ENCODE measurements at regions of chr7 and their contacts with region 1.

Region 1: DNA sequence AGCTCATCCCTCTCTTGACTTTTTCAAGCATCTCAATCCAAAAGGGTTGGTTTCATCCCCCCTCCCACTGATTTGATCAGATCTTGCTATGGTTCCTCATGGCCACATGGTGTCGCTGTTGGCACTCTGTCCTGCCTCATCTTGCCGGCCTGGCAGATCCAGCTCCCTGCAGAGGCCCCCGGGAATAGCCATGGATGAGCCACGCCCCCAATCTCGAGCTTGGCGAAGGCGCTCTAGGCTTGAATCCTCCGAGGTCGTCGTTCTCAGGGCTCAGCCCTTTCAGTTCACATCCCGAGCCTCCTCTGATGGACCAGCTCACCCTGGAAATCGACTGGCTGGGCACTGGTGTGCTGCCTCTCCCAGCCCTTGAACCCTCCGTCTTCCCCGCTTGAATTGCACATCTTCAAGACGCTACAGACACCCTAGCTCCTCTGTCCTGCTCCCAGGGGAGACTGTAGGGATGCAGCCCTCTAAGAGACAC is 628.7 kb downstream of the TYW1 start:
- DNase-seq: peak; percentile 92
- ATAC-seq: peak; percentile 97
- H3K4me3 Mint-ChIP-seq: peak overlapping the region; percentile 60
- H3K27ac Mint-ChIP-seq: no peak overlapping the region
- H3K4me1 Mint-ChIP-seq: peaks cover 29% of the 10 kb centered on the region
- H3K27me3 Mint-ChIP-seq: peaks cover 27% of the 10 kb centered on the region
- CTCF ChIP-seq: peak; percentile 90

Region 2: GRCh38 chr7:67371429-67372305 is 253.6 kb before region 1 on chr7:
- CTCF ChIA-PET with region 1: interaction called, 15 read pairs
- POLR2A ChIA-PET with region 1: no interaction called
- DNase-seq: peak; percentile 70
- ATAC-seq: peak; percentile 100
- H3K4me3 Mint-ChIP-seq: no peak overlapping the region
- H3K27ac Mint-ChIP-seq: no peak overlapping the region
- H3K4me1 Mint-ChIP-seq: no peaks in the 10 kb centered on the region
- H3K27me3 Mint-ChIP-seq: peaks cover 5% of the 10 kb centered on the region; the same call in 1 of the 2 replicates
- CTCF ChIP-seq: peak; percentile 78

Region 3: DNA sequence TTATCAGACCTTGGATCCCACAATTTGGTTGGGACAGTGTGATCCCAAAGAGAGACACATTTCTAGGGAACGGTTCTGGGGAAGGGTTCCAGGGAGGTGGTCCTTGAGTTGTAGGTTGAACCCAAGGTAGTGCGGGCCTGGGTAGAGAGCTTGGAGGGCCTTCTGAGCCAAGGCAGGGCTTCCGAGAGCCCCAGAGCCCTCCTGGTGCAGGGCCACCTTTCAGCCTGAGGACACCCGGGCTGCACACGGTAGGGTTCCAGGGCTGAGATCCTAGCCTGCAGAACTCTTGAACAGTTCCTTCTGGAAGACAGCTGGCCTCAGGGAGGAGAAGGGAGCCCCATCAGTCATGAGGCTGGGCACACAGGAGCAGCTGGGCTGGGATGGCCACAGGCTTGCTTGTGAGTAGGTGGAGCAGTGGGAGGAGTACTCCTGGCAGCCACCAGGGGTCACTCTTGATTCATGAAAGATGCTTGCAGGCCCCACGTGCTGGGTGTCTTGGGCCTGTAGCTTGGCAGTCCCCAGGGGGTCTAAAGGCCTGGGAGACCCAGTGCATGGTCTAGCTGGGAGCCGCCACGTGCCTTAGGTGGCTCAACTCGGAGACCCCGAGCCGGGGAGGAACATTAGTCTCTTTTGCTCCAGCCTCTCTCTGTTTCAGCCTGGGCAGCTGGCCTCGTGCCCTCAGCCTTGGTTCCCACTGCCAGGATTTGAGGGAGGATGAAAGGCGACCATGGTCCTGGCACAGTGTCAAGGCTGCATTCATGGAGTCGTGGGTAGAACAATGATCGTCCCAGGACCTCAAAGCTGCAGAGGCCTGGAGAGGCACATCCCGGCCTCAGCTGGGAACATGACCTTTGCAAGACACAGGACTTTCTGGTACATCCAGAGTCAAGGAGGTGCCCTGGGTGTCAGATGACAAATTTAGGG is 247.1 kb before region 1 on chr7:
- CTCF ChIA-PET with region 1: interaction called, 23 read pairs
- POLR2A ChIA-PET with region 1: no interaction called
- DNase-seq: peak; percentile 85
- ATAC-seq: peak; percentile 97
- H3K4me3 Mint-ChIP-seq: no peak overlapping the region
- H3K27ac Mint-ChIP-seq: no peak overlapping the region
- H3K4me1 Mint-ChIP-seq: no peaks in the 10 kb centered on the region
- H3K27me3 Mint-ChIP-seq: peaks cover 14% of the 10 kb centered on the region
- CTCF ChIP-seq: peak; percentile 97

Region 4: GRCh38 chr7:67484244-67484751 is 141.0 kb before region 1 on chr7:
- CTCF ChIA-PET with region 1: interaction called, 40 read pairs
- POLR2A ChIA-PET with region 1: interaction called, 6 read pairs
- DNase-seq: peak; percentile 80
- ATAC-seq: peak; percentile 86
- H3K4me3 Mint-ChIP-seq: peak overlapping the region; percentile 59
- H3K27ac Mint-ChIP-seq: peak overlapping the region; percentile 43; the same call in 1 of the 2 replicates
- H3K4me1 Mint-ChIP-seq: peaks cover 17% of the 10 kb centered on the region
- H3K27me3 Mint-ChIP-seq: peaks cover 12% of the 10 kb centered on the region
- CTCF ChIP-seq: peak; percentile 49

Region 5: DNA sequence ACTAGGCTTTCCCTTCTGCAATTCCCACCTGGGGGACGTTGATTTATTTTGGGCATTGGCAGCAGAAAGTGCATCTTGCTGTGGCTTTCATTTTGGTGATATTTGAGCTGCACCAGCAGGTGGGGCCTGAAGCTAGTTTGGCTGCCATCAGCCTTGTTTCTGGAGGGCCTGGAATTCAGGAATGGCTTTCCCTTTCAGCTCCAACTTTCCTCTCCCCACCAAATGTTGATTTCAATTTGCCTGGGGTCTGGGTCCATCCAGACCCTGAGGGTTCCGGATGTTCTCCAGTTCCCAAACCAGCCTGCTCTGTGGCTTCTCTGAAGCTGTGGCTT is 11.7 kb after region 1 on chr7:
- CTCF ChIA-PET with region 1: interaction called, 39 read pairs
- POLR2A ChIA-PET with region 1: no interaction called
- DNase-seq: peak; percentile 23
- ATAC-seq: peak; percentile 46
- H3K4me3 Mint-ChIP-seq: peak overlapping the region; percentile 59
- H3K27ac Mint-ChIP-seq: no peak overlapping the region
- H3K4me1 Mint-ChIP-seq: peaks cover 8% of the 10 kb centered on the region
- H3K27me3 Mint-ChIP-seq: no peaks in the 10 kb centered on the region
- CTCF ChIP-seq: no peak

Region 6: DNA sequence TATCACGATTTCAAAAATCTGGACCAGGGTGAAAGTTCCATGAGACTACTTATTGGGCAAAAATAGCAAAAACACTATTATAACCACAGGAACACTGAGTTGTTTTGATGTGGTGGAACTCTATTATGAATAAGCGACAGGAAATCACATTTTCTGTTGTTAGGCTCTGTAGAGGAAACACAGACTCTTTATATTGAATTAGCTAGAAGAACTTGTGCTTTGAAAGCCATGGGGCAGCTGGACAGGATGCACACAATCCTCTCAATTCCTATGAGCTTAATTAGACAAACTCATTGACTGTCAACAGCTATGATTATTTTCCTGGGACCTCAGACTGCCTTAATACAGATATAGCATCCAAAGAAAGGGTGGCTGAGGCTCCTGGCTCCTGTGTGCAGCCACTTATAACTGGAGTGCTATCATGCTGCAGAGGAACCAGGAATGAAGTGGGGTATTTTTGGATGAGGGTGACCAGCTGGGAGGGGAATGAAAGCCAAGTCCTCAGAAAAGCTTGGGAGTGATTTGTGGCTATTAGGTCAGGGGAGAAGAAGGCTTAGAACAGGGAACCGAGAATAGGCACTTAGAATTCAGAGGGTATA is 28.7 kb after region 1 on chr7:
- CTCF ChIA-PET with region 1: no interaction called
- POLR2A ChIA-PET with region 1: no interaction called
- DNase-seq: no peak
- ATAC-seq: no peak
- H3K4me3 Mint-ChIP-seq: no peak overlapping the region
- H3K27ac Mint-ChIP-seq: no peak overlapping the region
- H3K4me1 Mint-ChIP-seq: no peaks in the 10 kb centered on the region
- H3K27me3 Mint-ChIP-seq: no peaks in the 10 kb centered on the region
- CTCF ChIP-seq: no peak

Region 7: GRCh38 chr7:68063166-68063565 is 437.9 kb after region 1 on chr7:
- CTCF ChIA-PET with region 1: interaction called, 10 read pairs
- POLR2A ChIA-PET with region 1: no interaction called
- DNase-seq: peak; percentile 49
- ATAC-seq: peak; percentile 79
- H3K4me3 Mint-ChIP-seq: no peak overlapping the region
- H3K27ac Mint-ChIP-seq: no peak overlapping the region
- H3K4me1 Mint-ChIP-seq: peaks cover 19% of the 10 kb centered on the region
- H3K27me3 Mint-ChIP-seq: no peaks in the 10 kb centered on the region
- CTCF ChIP-seq: peak; percentile 55